ENCODE measurements at regions of chr6 and their contacts with region 1.

Region 1: GRCh38 chr6:57089687-57090460 is at the start of gene ZNF451:
- DNase-seq: peak; percentile 93 to 97 (median 94)
- H3K4me3 ChIP-seq: peak within 1 kb of the TSS; percentile 31 to 60
- H3K4me3 Mint-ChIP-seq: peak within 1 kb of the TSS; percentile 85 to 92 (median 90)
- H3K27ac ChIP-seq: peak within 1 kb of the TSS; percentile 60
- H3K27ac Mint-ChIP-seq: peak within 1 kb of the TSS; percentile 85 to 95 (median 92)
- H3K4me1 ChIP-seq: peaks cover 35% of the 10 kb centered on the region
- H3K4me1 Mint-ChIP-seq: peaks cover 22 to 38% (median 30%) of the 10 kb centered on the region in 4 donors
- H3K27me3 ChIP-seq: no peaks in the 10 kb centered on the region
- H3K27me3 Mint-ChIP-seq: no peaks in the 10 kb centered on the region
- total RNA-seq, gene ZNF451: 83.0 to 97.7 TPM

Region 2: GRCh38 chr6:57172136-57173055 is 82.5 kb after region 1 on chr6 and contains the start of gene BAG2:
- CTCF ChIA-PET with region 1: no interaction called
- POLR2A ChIA-PET with region 1: interaction called, 4 read pairs
- intact Hi-C with region 1: loop called (anchors 1 kb)
- DNase-seq: peak; percentile 83 to 93 (median 83)
- H3K4me3 ChIP-seq: peak within 1 kb of the TSS; percentile 55 to 71
- H3K4me3 Mint-ChIP-seq: peak within 1 kb of the TSS; percentile 88 to 96 (median 92)
- H3K27ac ChIP-seq: peak within 1 kb of the TSS; percentile 57
- H3K27ac Mint-ChIP-seq: peak within 1 kb of the TSS; percentile 78 to 98 (median 94)
- H3K4me1 ChIP-seq: peaks cover 13% of the 10 kb centered on the region
- H3K4me1 Mint-ChIP-seq: peaks cover 19 to 45% (median 27%) of the 10 kb centered on the region in 4 donors
- H3K27me3 ChIP-seq: no peaks in the 10 kb centered on the region
- H3K27me3 Mint-ChIP-seq: no peaks in the 10 kb centered on the region
- total RNA-seq, gene BAG2: 3.5 to 3.7 TPM

Region 3: DNA sequence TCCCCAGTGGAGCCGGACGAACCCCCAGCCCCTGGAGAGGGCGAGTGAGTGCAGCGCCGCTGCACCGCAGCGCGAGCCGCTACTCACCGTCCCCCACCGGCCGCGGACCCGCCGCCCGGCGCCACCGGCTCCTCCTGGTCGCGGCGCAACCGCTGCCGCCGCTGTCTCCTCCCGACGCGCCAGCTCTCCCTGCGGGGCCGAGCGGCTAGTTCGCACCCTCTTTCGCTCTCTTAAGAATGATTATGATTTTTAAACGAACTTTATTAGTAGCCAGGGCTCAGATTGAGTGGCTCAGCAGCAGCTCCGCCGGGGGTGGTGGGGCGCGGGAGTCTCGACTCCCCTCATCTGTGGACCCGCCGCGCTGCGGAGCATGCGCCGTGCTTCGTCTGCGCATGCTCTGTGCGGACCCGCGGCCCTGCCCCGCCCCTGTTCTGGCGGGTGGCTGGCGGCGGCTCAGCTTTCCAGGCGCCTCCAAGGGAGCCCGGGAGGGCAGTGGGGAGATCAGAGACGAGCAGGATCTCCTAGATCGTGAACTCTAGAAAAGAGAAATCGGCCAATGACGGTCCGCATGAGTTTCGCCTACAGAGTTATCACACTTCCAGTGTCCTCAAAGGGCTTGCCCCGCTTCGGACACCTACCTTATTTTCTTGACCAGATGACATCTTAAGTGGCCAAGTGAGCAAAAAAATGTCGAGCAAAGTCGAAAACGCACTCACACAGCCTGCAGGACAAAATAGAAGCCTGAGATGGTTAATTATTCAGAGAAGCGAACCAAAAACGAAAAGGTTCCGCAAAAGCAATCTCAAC is 132.3 kb after region 1 on chr6 and contains the start of gene RAB23:
- CTCF ChIA-PET with region 1: no interaction called
- POLR2A ChIA-PET with region 1: interaction called, 5 read pairs
- intact Hi-C with region 1: loop called (anchors 1 kb)
- DNase-seq: peak; percentile 72 to 89 (median 85)
- H3K4me3 ChIP-seq: peak within 1 kb of the TSS; percentile 64 to 96
- H3K4me3 Mint-ChIP-seq: peak within 1 kb of the TSS; percentile 98 to 100 (median 98)
- H3K27ac ChIP-seq: peak within 1 kb of the TSS; percentile 35
- H3K27ac Mint-ChIP-seq: peak within 1 kb of the TSS; percentile 87 to 97 (median 93)
- H3K4me1 ChIP-seq: peaks cover 10% of the 10 kb centered on the region
- H3K4me1 Mint-ChIP-seq: peaks cover 6 to 10% (median 9%) of the 10 kb centered on the region in 4 donors
- H3K27me3 ChIP-seq: peaks cover 5% of the 10 kb centered on the region
- H3K27me3 Mint-ChIP-seq: peaks cover 13 to 27% of the 10 kb centered on the region in 2 donors
- total RNA-seq, gene RAB23: 1.4 to 1.6 TPM